ENCODE measurements at regions of chr9 and their contacts with region 1.

Region 1: DNA sequence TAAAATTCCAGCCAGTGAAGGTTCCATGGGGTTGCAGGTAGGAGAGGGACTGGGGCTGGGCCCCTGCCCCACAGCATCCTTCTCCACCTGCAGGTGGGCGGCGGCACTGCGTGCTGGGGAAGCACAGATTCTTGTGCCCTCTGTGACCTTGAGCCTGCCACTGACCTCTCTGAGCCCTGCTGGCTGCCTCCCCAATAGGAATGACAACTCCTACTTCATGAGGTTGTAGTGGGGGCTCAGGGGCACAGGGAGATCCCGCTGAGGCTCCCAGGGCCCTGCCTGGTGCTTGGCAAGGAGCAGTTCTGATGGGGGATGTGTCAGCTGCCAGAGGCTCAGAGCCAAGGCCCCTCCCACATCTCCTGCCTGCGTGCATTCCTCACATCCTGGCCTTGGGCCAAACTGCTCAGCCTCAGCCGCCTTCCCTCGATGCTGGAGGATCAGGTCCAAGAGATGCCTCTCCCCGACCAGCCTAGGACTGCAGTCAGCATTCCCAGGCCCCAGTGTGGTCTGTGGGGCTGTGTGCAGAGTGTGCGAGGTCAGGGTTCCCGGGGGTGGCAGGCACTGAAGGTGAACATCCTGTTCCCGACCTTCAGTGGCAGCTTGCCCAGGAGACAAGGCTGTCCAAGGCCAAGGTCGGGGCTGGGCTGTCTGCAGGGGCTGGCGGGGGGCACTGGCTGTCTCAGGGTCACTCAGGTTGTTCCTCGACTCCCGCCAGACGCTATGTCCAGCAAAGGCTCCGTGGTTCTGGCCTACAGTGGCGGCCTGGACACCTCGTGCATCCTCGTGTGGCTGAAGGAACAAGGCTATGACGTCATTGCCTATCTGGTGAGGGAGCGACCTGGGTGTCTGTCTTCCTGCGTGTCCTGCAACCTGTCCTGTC is 7.0 kb downstream of the ASS1 start:
- DNase-seq: peak; percentile 61
- ATAC-seq: peak; percentile 49
- H3K4me3 ChIP-seq: peak overlapping the region in 1 of 3 experiments; percentile 53; a peak in 1 of 6 replicates
- H3K27ac ChIP-seq: no peak overlapping the region
- H3K4me1 ChIP-seq: peaks cover 74% of the 10 kb centered on the region
- H3K27me3 ChIP-seq: no peaks in the 10 kb centered on the region; a peak in 1 of 5 replicates
- CTCF ChIP-seq: peak; percentile 44
- EP300 ChIP-seq: no peak
- POLR2A ChIP-seq: no peak
- RAD21 ChIP-seq: peak; percentile 57; the same call in 1 of the 2 replicates

Region 2: GRCh38 chr9:130414910-130415746 is 36.6 kb before region 1 on chr9:
- CTCF ChIA-PET with region 1: no interaction called
- POLR2A ChIA-PET with region 1: no interaction called
- in situ Hi-C with region 1: no loop called
- intact Hi-C with region 1: no loop called
- DNase-seq: no peak
- ATAC-seq: no peak
- H3K4me3 ChIP-seq: no peak overlapping the region
- H3K27ac ChIP-seq: no peak overlapping the region
- H3K4me1 ChIP-seq: no peaks in the 10 kb centered on the region
- H3K27me3 ChIP-seq: peaks cover 4 to 13% of the 10 kb centered on the region in 2 experiments; a peak in 4 of 5 replicates
- CTCF ChIP-seq: no peak
- EP300 ChIP-seq: no peak
- POLR2A ChIP-seq: no peak
- RAD21 ChIP-seq: no peak

Region 3: GRCh38 chr9:130433168-130433946 is 18.4 kb before region 1 on chr9:
- CTCF ChIA-PET with region 1: interaction called, 3 read pairs
- POLR2A ChIA-PET with region 1: interaction called, 4 read pairs
- in situ Hi-C with region 1: no loop called
- intact Hi-C with region 1: loop called (anchors 2 kb)
- DNase-seq: no peak
- ATAC-seq: peak; percentile 91
- H3K4me3 ChIP-seq: peak overlapping the region; percentile 6 to 69 (median 53); a peak in 4 of 6 replicates
- H3K27ac ChIP-seq: no peak overlapping the region
- H3K4me1 ChIP-seq: peaks cover 54% of the 10 kb centered on the region
- H3K27me3 ChIP-seq: peaks cover 10 to 54% of the 10 kb centered on the region in 2 experiments; a peak in 4 of 5 replicates
- CTCF ChIP-seq: peak; percentile 67
- EP300 ChIP-seq: no peak
- POLR2A ChIP-seq: no peak
- RAD21 ChIP-seq: peak; percentile 75

Region 4: DNA sequence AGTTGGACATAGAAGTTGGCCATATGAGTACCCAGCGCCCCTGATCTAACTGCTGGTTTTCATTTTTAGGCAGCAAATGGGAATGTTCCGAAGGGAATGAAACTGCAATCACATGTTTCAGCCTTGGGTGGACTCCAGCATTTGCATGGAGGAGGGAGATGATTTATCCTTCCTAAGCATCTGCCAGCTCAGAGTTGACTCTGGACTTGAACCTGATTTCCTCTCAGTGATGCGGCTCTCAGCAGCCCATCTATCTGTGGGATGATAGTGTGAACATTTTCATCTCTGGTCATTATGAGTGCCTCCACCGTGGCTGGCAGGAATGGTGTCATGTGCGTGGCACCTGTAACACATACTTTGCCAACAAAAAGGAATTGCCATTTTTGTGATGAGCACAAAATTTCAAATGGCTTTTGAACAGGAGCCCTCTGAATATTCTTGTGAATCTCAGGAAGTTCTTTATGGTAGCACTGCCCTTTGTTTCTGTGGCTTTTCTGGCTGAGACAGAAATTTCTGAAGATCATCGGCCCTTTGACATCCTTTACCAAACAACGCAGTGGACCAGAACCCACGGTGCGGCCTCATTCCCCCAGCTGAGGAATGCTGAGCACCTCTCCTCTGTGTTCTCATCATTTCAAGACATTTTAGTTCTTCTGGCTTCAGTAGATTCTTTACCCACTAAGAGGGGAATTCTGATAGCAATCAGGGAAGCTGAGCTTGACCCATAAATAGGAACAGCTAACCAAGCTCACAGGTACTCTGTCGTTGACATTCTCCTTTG is 156.1 kb after region 1 on chr9:
- CTCF ChIA-PET with region 1: no interaction called
- POLR2A ChIA-PET with region 1: no interaction called
- in situ Hi-C with region 1: no loop called
- intact Hi-C with region 1: loop called (anchors 10 kb)
- DNase-seq: no peak
- ATAC-seq: no peak
- H3K4me3 ChIP-seq: no peak overlapping the region
- H3K27ac ChIP-seq: no peak overlapping the region
- H3K4me1 ChIP-seq: peaks cover 12% of the 10 kb centered on the region
- H3K27me3 ChIP-seq: no peaks in the 10 kb centered on the region
- CTCF ChIP-seq: no peak
- EP300 ChIP-seq: no peak
- POLR2A ChIP-seq: no peak
- RAD21 ChIP-seq: no peak

Region 5: GRCh38 chr9:130780865-130781504 is 329.2 kb after region 1 on chr9:
- CTCF ChIA-PET with region 1: no interaction called
- POLR2A ChIA-PET with region 1: no interaction called
- in situ Hi-C with region 1: no loop called
- intact Hi-C with region 1: no loop called
- DNase-seq: no peak
- ATAC-seq: no peak
- H3K4me3 ChIP-seq: no peak overlapping the region
- H3K27ac ChIP-seq: no peak overlapping the region
- H3K4me1 ChIP-seq: peaks cover 14% of the 10 kb centered on the region; the same call in 1 of the 2 replicates
- H3K27me3 ChIP-seq: no peaks in the 10 kb centered on the region
- CTCF ChIP-seq: no peak
- EP300 ChIP-seq: no peak
- POLR2A ChIP-seq: no peak
- RAD21 ChIP-seq: no peak

Region 6: DNA sequence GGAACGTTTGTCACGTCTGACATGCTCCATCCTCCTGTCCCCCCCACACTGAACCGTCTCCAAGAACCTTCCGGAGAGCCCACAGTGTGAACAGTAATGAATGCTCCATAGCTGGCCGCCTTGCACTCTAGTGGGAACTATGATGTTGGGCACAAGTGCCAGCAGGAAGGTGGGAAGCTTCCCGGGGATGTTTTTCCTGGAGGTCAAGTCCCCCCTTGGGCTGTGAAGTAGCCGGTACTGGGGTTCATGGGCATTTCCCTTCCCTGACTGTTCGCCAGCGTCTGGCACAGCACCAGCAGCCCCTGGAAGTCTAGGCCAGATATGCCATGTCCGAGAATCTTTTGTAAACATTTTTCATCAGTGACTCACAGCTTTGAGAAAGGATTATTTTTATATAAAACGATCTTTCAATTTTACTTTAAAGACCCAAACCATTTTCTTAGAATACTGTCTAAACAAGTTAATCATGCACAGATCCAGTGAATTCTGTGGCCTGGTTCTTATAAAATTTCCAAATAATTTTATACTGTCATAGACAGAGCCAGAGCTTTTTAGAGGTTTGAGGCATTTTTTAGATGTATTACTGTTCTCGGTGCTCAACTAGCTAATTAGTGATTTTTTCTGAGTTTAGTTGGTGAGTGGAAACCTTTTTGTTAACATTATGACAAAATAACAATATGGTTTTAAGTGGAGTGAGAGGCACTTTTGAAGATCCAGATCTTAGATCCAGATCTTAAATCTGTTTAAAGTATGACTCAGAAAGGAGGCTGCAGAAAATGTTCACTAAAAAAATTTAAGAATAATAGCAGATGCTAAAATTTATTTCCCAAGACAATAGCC is 395.0 kb after region 1 on chr9:
- CTCF ChIA-PET with region 1: no interaction called
- POLR2A ChIA-PET with region 1: no interaction called
- in situ Hi-C with region 1: no loop called
- intact Hi-C with region 1: loop called (anchors 5 kb)
- DNase-seq: no peak
- ATAC-seq: no peak
- H3K4me3 ChIP-seq: no peak overlapping the region
- H3K27ac ChIP-seq: no peak overlapping the region
- H3K4me1 ChIP-seq: peaks cover 25% of the 10 kb centered on the region
- H3K27me3 ChIP-seq: no peaks in the 10 kb centered on the region
- CTCF ChIP-seq: no peak
- EP300 ChIP-seq: no peak
- POLR2A ChIP-seq: no peak
- RAD21 ChIP-seq: no peak